CD4-positive, alpha-beta T cell (primary cell): ENCODE measurements at regions of chr17 and their contacts with region 1.

Region 1: GRCh38 chr17:38485146-38485468 is 56.8 kb downstream of the ARHGAP23 start:
- DNase-seq: no peak
- ATAC-seq: no peak
- H3K4me3 ChIP-seq: no peak overlapping the region
- H3K4me3 Mint-ChIP-seq: no peak overlapping the region
- H3K27ac ChIP-seq: no peak overlapping the region
- H3K27ac Mint-ChIP-seq: no peak overlapping the region
- H3K4me1 ChIP-seq: peaks cover 9% of the 10 kb centered on the region
- H3K4me1 Mint-ChIP-seq: peaks cover 9% of the 10 kb centered on the region
- H3K27me3 ChIP-seq: no peaks in the 10 kb centered on the region
- H3K27me3 Mint-ChIP-seq: no peaks in the 10 kb centered on the region
- CTCF ChIP-seq: no peak

Region 2: GRCh38 chr17:38421871-38422827 is 63.0 kb before region 1 on chr17:
- CTCF ChIA-PET with region 1: no interaction called
- POLR2A ChIA-PET with region 1: no interaction called
- intact Hi-C with region 1: loop called (anchors 2 kb)
- DNase-seq: no peak
- ATAC-seq: no peak
- H3K4me3 ChIP-seq: no peak overlapping the region
- H3K4me3 Mint-ChIP-seq: no peak overlapping the region
- H3K27ac ChIP-seq: no peak overlapping the region
- H3K27ac Mint-ChIP-seq: no peak overlapping the region
- H3K4me1 ChIP-seq: peaks cover 8% of the 10 kb centered on the region
- H3K4me1 Mint-ChIP-seq: peaks cover 6% of the 10 kb centered on the region
- H3K27me3 ChIP-seq: peaks cover 50 to 56% of the 10 kb centered on the region in 2 experiments
- H3K27me3 Mint-ChIP-seq: peaks cover 78% of the 10 kb centered on the region
- CTCF ChIP-seq: no peak

Region 3: DNA sequence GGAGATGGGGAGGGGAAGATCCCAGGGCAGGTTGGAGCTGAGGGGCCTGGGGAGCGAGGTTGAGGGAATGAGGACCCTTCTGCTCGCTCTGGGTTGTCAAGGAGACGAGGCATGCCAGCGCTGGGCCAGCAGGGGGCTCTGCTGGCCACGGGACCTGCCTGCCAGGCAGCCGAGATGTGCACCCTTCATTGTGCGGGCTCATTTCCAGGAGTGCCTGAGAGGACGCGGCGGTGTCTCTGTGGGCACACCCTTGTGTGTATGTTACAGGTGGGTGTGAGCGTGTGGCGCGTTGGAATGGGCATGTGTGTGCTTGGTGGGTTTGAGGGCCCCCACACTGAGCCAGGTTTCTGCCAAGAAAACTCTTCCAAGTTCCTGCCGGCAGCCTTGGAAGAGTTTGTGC is 41.0 kb before region 1 on chr17:
- CTCF ChIA-PET with region 1: no interaction called
- POLR2A ChIA-PET with region 1: no interaction called
- intact Hi-C with region 1: loop called in 1 of 2 experiments (anchors 5 kb)
- DNase-seq: peak; percentile 30 to 74 (median 43)
- ATAC-seq: peak; percentile 94
- H3K4me3 ChIP-seq: no peak overlapping the region
- H3K4me3 Mint-ChIP-seq: peak overlapping the region; percentile 7
- H3K27ac ChIP-seq: no peak overlapping the region
- H3K27ac Mint-ChIP-seq: no peak overlapping the region
- H3K4me1 ChIP-seq: peaks cover 8% of the 10 kb centered on the region
- H3K4me1 Mint-ChIP-seq: peaks cover 5% of the 10 kb centered on the region
- H3K27me3 ChIP-seq: no peaks in the 10 kb centered on the region
- H3K27me3 Mint-ChIP-seq: peaks cover 5% of the 10 kb centered on the region
- CTCF ChIP-seq: peak; percentile 66